Caco-2 (cell line): ENCODE measurements at regions of chr6 and their contacts with region 1.

Region 1: GRCh38 chr6:43769526-43770416 is at the start of gene VEGFA:
- DNase-seq: peak; percentile 88 to 92
- H3K4me3 ChIP-seq: peak within 1 kb of the TSS; percentile 95
- H3K4me3 Mint-ChIP-seq: peak within 1 kb of the TSS; percentile 96
- H3K27ac Mint-ChIP-seq: peak within 1 kb of the TSS; percentile 92
- H3K4me1 ChIP-seq: peaks cover 37% of the 10 kb centered on the region
- H3K4me1 Mint-ChIP-seq: peaks cover 24% of the 10 kb centered on the region
- H3K27me3 ChIP-seq: no peaks in the 10 kb centered on the region
- H3K27me3 Mint-ChIP-seq: no peaks in the 10 kb centered on the region
- CTCF ChIP-seq: peak; percentile 92 to 97
- total RNA-seq, gene VEGFA: 172 and 174 TPM in 2 replicates

Region 2: GRCh38 chr6:43723737-43724295 is 46.0 kb before region 1 on chr6:
- CTCF ChIA-PET with region 1: interaction called, 4 read pairs
- POLR2A ChIA-PET with region 1: no interaction called
- intact Hi-C with region 1: loop called (anchors 2 kb)
- DNase-seq: peak; percentile 74 to 82
- H3K4me3 ChIP-seq: no peak overlapping the region
- H3K4me3 Mint-ChIP-seq: no peak overlapping the region
- H3K27ac Mint-ChIP-seq: no peak overlapping the region
- H3K4me1 ChIP-seq: no peaks in the 10 kb centered on the region
- H3K4me1 Mint-ChIP-seq: no peaks in the 10 kb centered on the region
- H3K27me3 ChIP-seq: no peaks in the 10 kb centered on the region
- H3K27me3 Mint-ChIP-seq: no peaks in the 10 kb centered on the region
- CTCF ChIP-seq: peak; percentile 73 to 79

Region 3: DNA sequence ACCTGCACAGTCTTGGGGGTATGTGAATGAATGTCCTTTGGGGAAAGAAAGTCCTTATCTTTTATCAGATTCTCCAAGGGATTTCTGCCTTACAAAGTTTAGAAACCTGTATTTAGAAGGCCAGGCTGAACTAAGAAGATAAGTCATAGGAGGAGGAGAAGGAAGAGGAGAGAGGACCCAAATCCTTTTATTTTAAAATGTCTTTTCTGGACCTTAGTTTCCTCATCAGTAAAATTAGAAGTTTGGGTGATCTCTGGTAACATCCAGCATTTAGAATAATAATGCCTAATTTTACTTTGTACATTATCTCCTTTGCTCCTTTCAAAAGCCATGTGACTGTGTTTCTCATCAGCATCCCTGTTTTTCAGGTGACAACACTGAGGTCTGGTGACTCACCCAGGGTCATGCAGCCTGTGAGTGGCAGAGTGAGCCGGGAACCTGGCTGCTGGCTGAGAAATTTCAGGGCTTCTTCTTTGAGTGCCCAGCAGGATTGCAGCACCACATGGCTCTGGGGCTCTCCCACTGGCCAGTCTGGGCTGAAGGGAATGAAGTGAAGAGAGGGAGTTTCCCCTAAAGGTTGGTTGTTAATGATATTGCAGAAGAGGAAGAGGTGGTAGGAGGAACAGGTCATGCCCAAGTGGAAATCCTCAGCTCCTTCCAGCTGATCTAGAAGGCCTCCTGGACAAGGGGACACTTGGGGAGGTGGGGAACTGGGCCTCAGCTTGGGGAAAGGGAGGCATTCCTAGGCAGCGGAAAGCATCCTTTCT is 34.2 kb after region 1 on chr6:
- CTCF ChIA-PET with region 1: interaction called, 8 read pairs
- POLR2A ChIA-PET with region 1: interaction called, 13 read pairs
- intact Hi-C with region 1: no loop called
- DNase-seq: peak; percentile 70 to 75
- H3K4me3 ChIP-seq: no peak overlapping the region
- H3K4me3 Mint-ChIP-seq: peak overlapping the region; percentile 59
- H3K27ac Mint-ChIP-seq: peak overlapping the region; percentile 93
- H3K4me1 ChIP-seq: peaks cover 94% of the 10 kb centered on the region
- H3K4me1 Mint-ChIP-seq: peaks cover 82% of the 10 kb centered on the region
- H3K27me3 ChIP-seq: no peaks in the 10 kb centered on the region
- H3K27me3 Mint-ChIP-seq: no peaks in the 10 kb centered on the region
- CTCF ChIP-seq: no peak

Region 4: GRCh38 chr6:43838276-43839036 is 68.7 kb after region 1 on chr6:
- CTCF ChIA-PET with region 1: interaction called, 3 read pairs
- POLR2A ChIA-PET with region 1: interaction called, 7 read pairs
- intact Hi-C with region 1: loop called (anchors 1 kb)
- DNase-seq: peak; percentile 64 to 70
- H3K4me3 ChIP-seq: no peak overlapping the region
- H3K4me3 Mint-ChIP-seq: peak overlapping the region; percentile 52
- H3K27ac Mint-ChIP-seq: peak overlapping the region; percentile 92
- H3K4me1 ChIP-seq: peaks cover 63% of the 10 kb centered on the region
- H3K4me1 Mint-ChIP-seq: peaks cover 31% of the 10 kb centered on the region
- H3K27me3 ChIP-seq: no peaks in the 10 kb centered on the region
- H3K27me3 Mint-ChIP-seq: no peaks in the 10 kb centered on the region
- CTCF ChIP-seq: peak; percentile 62 to 72

Region 5: GRCh38 chr6:43878823-43879495 is 109.2 kb after region 1 on chr6:
- CTCF ChIA-PET with region 1: no interaction called
- POLR2A ChIA-PET with region 1: no interaction called
- intact Hi-C with region 1: no loop called
- DNase-seq: no peak
- H3K4me3 ChIP-seq: no peak overlapping the region
- H3K4me3 Mint-ChIP-seq: no peak overlapping the region
- H3K27ac Mint-ChIP-seq: no peak overlapping the region
- H3K4me1 ChIP-seq: peaks cover 12% of the 10 kb centered on the region
- H3K4me1 Mint-ChIP-seq: peaks cover 8% of the 10 kb centered on the region
- H3K27me3 ChIP-seq: no peaks in the 10 kb centered on the region
- H3K27me3 Mint-ChIP-seq: no peaks in the 10 kb centered on the region
- CTCF ChIP-seq: no peak

Region 6: DNA sequence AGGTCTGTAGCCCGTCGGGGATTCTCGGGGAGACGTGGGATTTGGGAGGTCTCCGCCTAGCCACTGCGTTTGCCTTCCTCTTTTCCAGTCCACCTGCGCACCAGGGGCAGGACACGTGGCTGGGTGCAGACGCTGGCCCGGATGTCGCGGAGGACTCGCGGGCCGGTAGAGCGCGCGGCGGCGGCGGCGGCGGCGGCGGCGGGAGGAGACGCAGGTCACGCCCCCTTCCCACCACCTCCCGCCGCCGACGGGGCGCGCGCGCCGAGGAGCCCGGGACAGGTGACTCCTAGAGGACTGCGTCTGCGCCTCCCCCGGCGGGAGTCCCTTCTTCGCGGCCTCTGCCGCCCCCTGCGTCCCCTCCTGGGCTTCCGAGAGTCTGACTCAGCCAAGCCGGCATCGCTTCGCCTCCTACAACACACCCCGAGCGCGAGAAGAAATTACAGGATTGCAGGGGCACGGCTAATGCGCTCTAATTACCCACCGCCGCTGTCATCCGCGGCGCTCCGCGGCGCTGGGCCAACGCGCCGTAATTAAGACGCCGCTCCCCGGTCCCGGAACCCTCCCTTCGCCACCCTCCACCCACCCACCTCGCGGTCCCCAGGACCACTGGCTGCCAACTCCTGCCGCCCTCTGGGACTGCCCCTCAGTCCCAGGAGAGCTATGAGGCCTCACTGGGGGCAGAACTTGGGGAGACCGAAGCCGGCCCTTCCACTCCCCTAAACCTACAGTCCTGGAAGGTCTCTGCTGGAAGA is 233.0 kb after region 1 on chr6:
- CTCF ChIA-PET with region 1: interaction called, 4 read pairs
- POLR2A ChIA-PET with region 1: interaction called, 5 read pairs
- intact Hi-C with region 1: loop called (anchors 5 kb)
- DNase-seq: peak; percentile 84 to 86
- H3K4me3 ChIP-seq: peak overlapping the region; percentile 49
- H3K4me3 Mint-ChIP-seq: peak overlapping the region; percentile 66
- H3K27ac Mint-ChIP-seq: peak overlapping the region; percentile 75
- H3K4me1 ChIP-seq: peaks cover 21% of the 10 kb centered on the region
- H3K4me1 Mint-ChIP-seq: no peaks in the 10 kb centered on the region
- H3K27me3 ChIP-seq: no peaks in the 10 kb centered on the region
- H3K27me3 Mint-ChIP-seq: no peaks in the 10 kb centered on the region
- CTCF ChIP-seq: peak; percentile 15 to 52